ENCODE measurements at regions of chr6 and their contacts with region 1.

Region 1: GRCh38 chr6:111642463-111643158 is 36.9 kb upstream of the TRAF3IP2 start:
- DNase-seq: peak; percentile 83

Region 2: DNA sequence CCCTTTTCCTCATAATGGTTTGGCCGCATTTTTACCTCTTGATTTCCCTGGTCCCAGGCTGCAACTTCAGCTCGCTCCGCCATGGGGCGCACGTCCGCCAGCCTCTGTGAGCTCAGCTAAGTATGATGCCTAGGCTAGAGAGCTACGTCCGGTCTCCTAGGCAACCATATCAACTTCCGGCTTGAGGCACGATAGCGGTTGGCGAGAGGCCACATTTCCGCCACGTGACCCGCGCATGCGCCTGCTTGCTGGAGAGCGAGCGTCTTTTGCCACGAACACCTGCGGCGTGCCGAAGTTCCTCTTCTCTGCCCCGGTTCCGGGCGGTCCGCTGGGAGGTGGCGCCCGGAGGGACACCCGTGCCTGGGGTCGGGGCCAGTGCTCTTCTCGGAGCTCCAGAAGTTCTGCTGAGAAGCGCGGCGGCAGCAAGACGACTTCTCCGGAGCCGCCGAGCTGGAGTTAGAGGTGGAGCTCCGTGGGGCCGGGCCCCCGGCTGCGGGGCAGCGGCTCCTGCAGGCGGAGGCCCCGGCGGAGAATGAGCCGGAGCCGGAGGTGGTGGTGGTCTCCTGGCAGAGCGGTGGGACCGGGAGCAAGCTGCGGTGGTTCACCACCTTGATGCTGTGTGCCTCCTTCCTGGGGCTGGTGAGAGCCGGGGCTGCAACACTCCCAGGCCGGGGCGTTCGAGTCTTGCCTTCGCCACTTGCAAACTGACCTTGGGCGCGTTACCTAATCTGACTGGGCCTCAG is 383.4 kb before region 1 on chr6:
- intact Hi-C with region 1: loop called (anchors 10 kb)
- DNase-seq: peak; percentile 99

Region 3: DNA sequence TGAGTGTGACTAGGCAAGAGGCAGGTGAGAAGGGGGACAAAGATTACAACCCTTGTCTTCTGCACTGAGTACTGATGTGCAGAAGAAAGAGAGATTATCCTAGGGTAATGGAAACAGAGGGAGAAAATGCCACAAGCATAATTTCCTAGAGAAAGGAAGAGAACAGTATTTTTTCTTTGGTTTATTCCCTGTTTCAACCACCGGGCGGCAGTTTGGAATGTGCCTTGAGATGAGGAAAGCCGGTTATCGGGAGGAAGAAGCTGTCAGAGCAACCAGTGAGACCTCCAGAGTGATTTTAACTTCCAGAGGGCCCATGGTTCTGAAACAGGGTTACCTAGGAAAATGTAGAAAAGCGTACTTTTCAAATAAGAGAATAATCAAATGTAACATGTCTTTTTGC is 281.0 kb before region 1 on chr6:
- intact Hi-C with region 1: loop called (anchors 5 kb)
- DNase-seq: no peak

Region 4: GRCh38 chr6:111591104-111591900 is 51.3 kb before region 1 on chr6:
- intact Hi-C with region 1: no loop called
- DNase-seq: no peak

Region 5: DNA sequence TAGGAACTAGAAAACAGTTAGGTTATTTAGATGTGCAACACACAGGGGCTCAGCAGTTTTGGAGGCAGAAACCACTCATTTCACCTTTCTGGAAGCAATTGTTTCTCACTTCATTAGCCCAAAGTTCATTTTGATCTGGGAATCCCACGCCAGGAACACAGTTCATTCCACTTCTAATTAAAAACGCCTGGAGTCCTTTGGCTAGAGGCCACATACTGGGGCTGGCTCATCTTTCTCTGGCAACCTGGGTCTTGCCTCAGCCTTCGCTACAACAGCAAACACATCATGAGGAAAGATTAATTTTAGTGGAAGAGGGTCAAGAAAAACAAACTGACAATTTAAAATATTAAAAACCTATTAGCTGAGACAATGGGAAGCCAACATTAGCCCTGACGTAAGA is 774.3 kb after region 1 on chr6:
- intact Hi-C with region 1: no loop called
- DNase-seq: no peak